Right ventricle myocardium inferior (tissue), 1 donor: ENCODE measurements at regions of chr9 and their contacts with region 1.

Region 1: GRCh38 chr9:69385581-69386033 is 60.6 kb downstream of the ENTREP1 start:
- DNase-seq: no peak
- ATAC-seq: no peak

Region 2: GRCh38 chr9:68595868-68596267 is 789.7 kb before region 1 on chr9:
- intact Hi-C with region 1: no loop called
- DNase-seq: no peak
- ATAC-seq: no peak

Region 3: GRCh38 chr9:69265891-69266290 is 119.7 kb before region 1 on chr9:
- intact Hi-C with region 1: loop called (anchors 10 kb)
- DNase-seq: no peak
- ATAC-seq: no peak